SK-N-SH (cell line): ENCODE measurements at regions of chrX and their contacts with region 1.

Region 1: DNA sequence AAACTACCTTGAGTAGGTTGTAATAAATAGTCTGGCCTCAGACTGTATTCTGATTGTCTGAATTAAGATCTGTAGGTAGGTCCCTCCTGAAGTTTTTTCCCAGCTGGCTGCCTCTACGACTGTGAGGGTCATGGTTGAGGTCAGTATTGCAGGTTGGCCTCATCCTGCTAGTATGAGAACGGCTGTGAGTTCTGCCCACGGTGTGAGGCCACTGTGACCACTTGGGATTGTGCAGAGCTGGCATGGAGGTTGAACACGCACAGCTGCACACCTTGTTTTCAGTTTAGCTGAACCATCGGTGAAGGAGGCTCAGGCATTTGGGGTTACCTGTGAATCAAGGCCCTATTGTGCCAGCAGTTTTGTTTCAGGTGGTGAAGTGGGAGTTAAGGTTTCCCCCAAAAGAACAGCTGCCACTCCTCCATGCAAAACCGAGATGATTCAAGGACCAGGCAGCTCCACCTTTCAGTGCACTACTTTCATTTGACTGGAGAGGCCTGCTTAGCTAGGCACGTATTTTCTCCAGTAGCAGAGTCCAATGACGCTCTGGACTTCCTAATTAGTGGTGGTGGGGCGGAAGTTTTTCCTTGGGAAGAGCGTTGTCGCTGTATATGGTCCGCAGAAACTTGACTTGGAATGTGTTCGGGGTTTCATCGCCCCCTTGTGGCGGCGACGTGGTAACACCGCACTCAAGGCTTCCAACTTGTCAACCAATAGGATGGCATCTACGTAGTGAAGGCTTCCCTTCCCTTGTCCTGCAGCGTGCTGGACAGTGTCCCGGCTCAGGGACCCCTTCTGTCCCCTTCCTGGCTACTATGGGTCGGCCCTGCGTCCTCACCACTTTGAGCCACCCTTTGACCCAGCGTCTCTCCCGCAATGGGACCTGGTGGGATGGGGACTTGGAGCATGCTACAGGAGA is 13.8 kb downstream of the CMC4 start:
- DNase-seq: peak; percentile 69
- H3K4me3 ChIP-seq: no peak overlapping the region
- H3K27ac ChIP-seq: no peak overlapping the region
- H3K4me1 ChIP-seq: peaks cover 0 to 7% of the 10 kb centered on the region in 2 experiments; a peak in 1 of 4 replicates
- H3K27me3 ChIP-seq: no peaks in the 10 kb centered on the region
- CTCF ChIP-seq: peak; percentile 83
- EP300 ChIP-seq: no peak
- RAD21 ChIP-seq: peak; percentile 72

Region 2: GRCh38 chrX:154918060-154918483 is 139.1 kb before region 1 on chrX:
- CTCF ChIA-PET with region 1: interaction called, 28 read pairs
- POLR2A ChIA-PET with region 1: no interaction called
- DNase-seq: peak; percentile 65
- H3K4me3 ChIP-seq: peak overlapping the region; percentile 6 to 22; a peak in 2 of 4 replicates
- H3K27ac ChIP-seq: peak overlapping the region; percentile 2 to 9; a peak in 2 of 4 replicates
- H3K4me1 ChIP-seq: no peaks in the 10 kb centered on the region; a peak in 1 of 4 replicates
- H3K27me3 ChIP-seq: no peaks in the 10 kb centered on the region
- CTCF ChIP-seq: peak; percentile 83
- EP300 ChIP-seq: no peak
- RAD21 ChIP-seq: peak; percentile 90

Region 3: GRCh38 chrX:154986826-154987576 is 70.1 kb before region 1 on chrX:
- CTCF ChIA-PET with region 1: interaction called, 11 read pairs
- POLR2A ChIA-PET with region 1: no interaction called
- DNase-seq: no peak
- H3K4me3 ChIP-seq: no peak overlapping the region
- H3K27ac ChIP-seq: no peak overlapping the region
- H3K4me1 ChIP-seq: no peaks in the 10 kb centered on the region
- H3K27me3 ChIP-seq: no peaks in the 10 kb centered on the region
- CTCF ChIP-seq: no peak
- EP300 ChIP-seq: no peak
- RAD21 ChIP-seq: peak; percentile 54

Region 4: DNA sequence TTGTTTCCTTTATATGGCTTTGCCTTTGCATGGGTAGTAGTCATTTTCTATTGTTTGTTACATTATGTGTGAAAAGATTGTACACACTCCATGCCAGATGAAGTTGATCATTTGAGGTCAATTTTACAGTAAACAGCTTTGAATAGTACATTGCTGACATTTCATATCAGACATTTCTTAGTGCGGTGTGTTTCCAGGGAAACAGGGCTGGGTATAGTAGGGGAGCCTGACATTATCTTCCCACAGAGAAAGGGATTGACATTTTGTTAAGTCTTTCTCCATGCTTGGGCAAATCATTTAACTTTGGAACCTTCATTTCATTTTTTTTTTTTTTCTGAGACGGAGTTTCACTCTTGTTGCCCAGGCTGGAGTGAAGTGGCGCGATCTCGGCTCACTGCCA is 25.5 kb before region 1 on chrX:
- CTCF ChIA-PET with region 1: interaction called, 12 read pairs
- POLR2A ChIA-PET with region 1: interaction called, 4 read pairs
- DNase-seq: no peak
- H3K4me3 ChIP-seq: no peak overlapping the region
- H3K27ac ChIP-seq: no peak overlapping the region
- H3K4me1 ChIP-seq: no peaks in the 10 kb centered on the region; a peak in 1 of 4 replicates
- H3K27me3 ChIP-seq: no peaks in the 10 kb centered on the region
- CTCF ChIP-seq: no peak
- EP300 ChIP-seq: no peak
- RAD21 ChIP-seq: no peak

Region 5: GRCh38 chrX:155046129-155046810 is 10.9 kb before region 1 on chrX:
- CTCF ChIA-PET with region 1: interaction called, 16 read pairs
- POLR2A ChIA-PET with region 1: no interaction called
- DNase-seq: no peak
- H3K4me3 ChIP-seq: no peak overlapping the region
- H3K27ac ChIP-seq: no peak overlapping the region
- H3K4me1 ChIP-seq: no peaks in the 10 kb centered on the region
- H3K27me3 ChIP-seq: no peaks in the 10 kb centered on the region
- CTCF ChIP-seq: no peak
- EP300 ChIP-seq: no peak
- RAD21 ChIP-seq: no peak

Region 6: GRCh38 chrX:155070975-155071693 is 14.0 kb after region 1 on chrX and contains the starts of genes BRCC3, CMC4 and MTCP1:
- CTCF ChIA-PET with region 1: interaction called, 35 read pairs
- POLR2A ChIA-PET with region 1: no interaction called
- DNase-seq: peak; percentile 93
- H3K4me3 ChIP-seq: peak within 1 kb of the TSS; percentile 64 to 72
- H3K27ac ChIP-seq: peak within 1 kb of the TSS; percentile 75 to 76
- H3K4me1 ChIP-seq: no peaks in the 10 kb centered on the region; a peak in 2 of 4 replicates
- H3K27me3 ChIP-seq: no peaks in the 10 kb centered on the region
- CTCF ChIP-seq: no peak
- EP300 ChIP-seq: no peak
- RAD21 ChIP-seq: no peak
- polyA plus RNA-seq, gene BRCC3: 11.2 and 16.6 TPM in 2 replicates
- polyA plus RNA-seq, gene CMC4: 11.8 and 12.0 TPM in 2 replicates
- polyA plus RNA-seq, gene MTCP1: 3.7 and 4.9 TPM in 2 replicates